HCT116 (cell line): ENCODE measurements at regions of chr7 and their contacts with region 1.

Region 1: GRCh38 chr7:38796626-38797501 is 112.1 kb downstream of the VPS41 start:
- DNase-seq: peak; percentile 34
- ATAC-seq: no peak
- H3K4me3 ChIP-seq: no peak overlapping the region
- H3K27ac ChIP-seq: no peak overlapping the region
- H3K4me1 ChIP-seq: no peaks in the 10 kb centered on the region
- H3K27me3 ChIP-seq: no peaks in the 10 kb centered on the region
- CTCF ChIP-seq: peak; percentile 53 to 86 (median 61); a peak in 4 of 6 replicates
- POLR2A ChIP-seq: no peak
- RAD21 ChIP-seq: peak; percentile 84

Region 2: DNA sequence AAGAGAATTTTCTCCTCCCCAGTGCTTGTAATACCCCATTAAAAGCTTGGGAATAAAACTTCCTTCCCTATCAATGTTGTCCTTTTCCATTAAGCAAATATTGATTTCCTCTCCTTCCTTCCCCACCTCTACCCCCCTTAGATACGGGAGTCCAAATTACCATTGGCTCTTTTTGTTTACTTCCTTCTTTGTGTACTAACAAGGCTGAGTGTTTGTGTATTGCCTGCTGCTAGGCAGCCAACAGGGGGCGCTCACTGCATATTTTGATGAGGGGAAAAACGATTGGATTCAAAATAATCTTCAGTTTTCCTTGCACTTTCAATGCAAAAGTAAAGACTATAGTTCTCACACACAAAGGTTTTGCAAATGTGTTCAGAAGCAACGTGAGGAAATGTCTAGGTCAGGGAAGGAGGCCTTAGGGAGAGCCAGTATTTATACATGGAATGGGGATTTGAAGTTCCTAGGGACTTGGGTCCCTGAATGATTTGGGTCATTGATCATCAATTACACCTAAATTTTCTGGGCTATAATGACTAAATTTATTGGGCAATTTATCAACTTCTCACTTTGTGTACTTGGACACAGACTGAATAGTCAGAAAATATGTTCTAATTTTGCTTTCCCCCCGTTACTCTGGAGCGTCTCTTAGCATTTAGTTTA is 135.8 kb after region 1 on chr7:
- CTCF ChIA-PET with region 1: interaction called, 3 read pairs
- POLR2A ChIA-PET with region 1: no interaction called
- RAD21 ChIA-PET with region 1: no interaction called
- intact Hi-C with region 1: loop called (anchors 5 kb)
- DNase-seq: peak; percentile 55
- ATAC-seq: peak; percentile 93
- H3K4me3 ChIP-seq: no peak overlapping the region
- H3K27ac ChIP-seq: no peak overlapping the region
- H3K4me1 ChIP-seq: 0 out of 4 replicates have a peak, but pooled peaks cover 0 to 3% of the 10 kb centered on the region in 2 experiments
- H3K27me3 ChIP-seq: no peaks in the 10 kb centered on the region
- CTCF ChIP-seq: peak; percentile 65 to 99 (median 95); a peak in 5 of 6 replicates
- POLR2A ChIP-seq: no peak
- RAD21 ChIP-seq: peak; percentile 79

Region 3: DNA sequence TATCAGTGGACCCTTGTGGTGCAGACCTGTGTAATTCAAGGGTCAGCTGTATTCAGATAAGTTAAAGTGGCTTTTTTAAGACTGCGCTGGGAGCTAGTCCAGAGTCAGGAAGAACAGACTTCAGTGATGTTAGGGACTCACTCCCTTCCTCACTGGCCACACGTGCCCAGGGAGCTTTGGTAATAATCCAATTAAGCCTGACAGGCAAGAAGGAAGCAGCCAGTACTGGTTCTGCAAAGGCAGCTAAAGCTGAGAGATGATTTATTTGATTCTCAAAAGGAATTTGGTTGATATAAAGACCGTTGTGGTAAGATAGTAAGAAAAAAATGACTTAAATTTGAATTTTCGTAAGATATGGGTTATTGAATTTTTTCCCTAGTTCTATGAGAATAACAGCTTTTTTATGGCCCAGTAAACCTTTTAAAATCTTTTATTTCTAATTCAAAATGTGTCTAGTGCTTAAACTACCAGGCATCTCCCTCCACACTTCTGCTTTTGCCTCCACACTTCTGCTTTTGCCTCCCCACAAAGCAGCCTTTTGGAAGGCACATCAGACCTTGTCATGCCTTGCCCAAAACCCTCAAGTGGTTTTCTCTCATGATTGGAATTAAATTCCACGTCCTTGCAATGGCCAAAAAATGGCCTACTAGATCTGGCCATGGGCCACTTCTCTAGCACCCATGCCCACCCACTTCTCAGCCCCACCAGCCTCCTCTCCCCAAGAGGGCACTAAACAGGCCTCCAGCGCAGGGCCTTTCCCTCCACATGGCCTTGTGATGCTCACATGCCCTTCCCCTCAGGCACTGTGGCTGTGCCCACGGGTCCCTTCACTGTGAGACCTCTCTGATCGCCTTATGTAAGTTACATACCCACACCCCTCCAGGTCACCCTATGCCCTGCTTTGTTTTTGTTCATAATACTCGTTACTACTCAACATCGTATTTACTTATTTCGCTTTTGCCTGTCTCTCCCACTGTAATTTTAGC is 273.3 kb after region 1 on chr7:
- CTCF ChIA-PET with region 1: no interaction called
- POLR2A ChIA-PET with region 1: no interaction called
- RAD21 ChIA-PET with region 1: no interaction called
- intact Hi-C with region 1: loop called (anchors 10 kb)
- DNase-seq: no peak
- ATAC-seq: no peak
- H3K4me3 ChIP-seq: no peak overlapping the region
- H3K27ac ChIP-seq: no peak overlapping the region
- H3K4me1 ChIP-seq: no peaks in the 10 kb centered on the region
- H3K27me3 ChIP-seq: peaks cover 18% of the 10 kb centered on the region
- CTCF ChIP-seq: no peak
- POLR2A ChIP-seq: no peak
- RAD21 ChIP-seq: no peak

Region 4: DNA sequence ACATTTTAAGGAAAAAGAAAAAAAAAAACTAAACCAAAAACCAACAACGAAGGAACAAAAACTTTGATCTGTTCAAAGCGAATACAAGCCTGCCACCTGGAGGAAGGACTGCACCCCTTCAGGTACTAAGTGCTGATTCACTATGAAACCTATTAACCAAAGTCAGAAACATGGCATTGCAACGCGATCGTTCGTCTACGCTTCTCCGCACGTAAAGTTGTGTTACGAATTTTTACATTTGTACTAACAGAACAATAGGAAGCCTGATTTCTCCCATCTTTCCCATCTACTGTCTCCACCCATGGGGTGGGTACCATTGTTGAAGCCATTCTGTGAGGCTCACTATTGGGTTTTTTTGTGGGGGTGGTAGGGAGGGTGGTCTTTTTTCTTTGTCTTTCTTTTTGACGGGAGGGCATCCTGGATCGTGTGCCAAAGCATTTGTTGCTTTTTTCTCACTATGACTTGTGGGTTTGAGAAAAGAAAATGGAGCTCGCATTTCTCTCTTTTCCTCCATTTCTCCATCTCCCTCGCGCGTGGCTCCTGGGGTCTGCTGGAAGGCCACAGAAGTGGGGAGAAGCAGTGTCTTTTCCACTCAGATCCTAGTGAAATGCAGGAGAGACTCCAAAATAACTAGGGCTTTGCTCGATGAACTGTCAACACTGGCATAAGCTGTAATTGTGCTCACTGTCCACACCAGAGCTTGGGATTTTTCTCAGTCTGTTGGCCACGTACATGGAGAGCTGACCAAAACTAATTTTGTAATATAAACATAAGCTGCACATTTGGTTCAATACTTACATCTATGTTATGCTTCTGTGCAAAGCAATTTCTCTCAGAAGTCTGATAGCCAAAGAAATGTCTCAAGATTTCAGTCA is 668.4 kb after region 1 on chr7:
- CTCF ChIA-PET with region 1: interaction called, 4 read pairs
- POLR2A ChIA-PET with region 1: no interaction called
- RAD21 ChIA-PET with region 1: no interaction called
- intact Hi-C with region 1: loop called (anchors 1 kb)
- DNase-seq: peak; percentile 56
- ATAC-seq: peak; percentile 93
- H3K4me3 ChIP-seq: peak overlapping the region; percentile 9 to 40; a peak in 3 of 4 replicates
- H3K27ac ChIP-seq: no peak overlapping the region
- H3K4me1 ChIP-seq: peaks cover 0 to 6% of the 10 kb centered on the region in 2 experiments; a peak in 2 of 4 replicates
- H3K27me3 ChIP-seq: no peaks in the 10 kb centered on the region
- CTCF ChIP-seq: peak; percentile 71 to 82 (median 82)
- POLR2A ChIP-seq: no peak
- RAD21 ChIP-seq: peak; percentile 77

Region 5: GRCh38 chr7:39517240-39517639 is 720.4 kb after region 1 on chr7:
- CTCF ChIA-PET with region 1: interaction called, 3 read pairs
- POLR2A ChIA-PET with region 1: no interaction called
- RAD21 ChIA-PET with region 1: no interaction called
- intact Hi-C with region 1: loop called (anchors 1 kb)
- DNase-seq: no peak
- ATAC-seq: no peak
- H3K4me3 ChIP-seq: no peak overlapping the region
- H3K27ac ChIP-seq: no peak overlapping the region
- H3K4me1 ChIP-seq: peaks cover 0 to 7% of the 10 kb centered on the region in 2 experiments; a peak in 1 of 4 replicates
- H3K27me3 ChIP-seq: no peaks in the 10 kb centered on the region
- CTCF ChIP-seq: no peak
- POLR2A ChIP-seq: no peak
- RAD21 ChIP-seq: no peak